Caco-2 (cell line): ENCODE measurements at regions of chr1 and their contacts with region 1.

Region 1: GRCh38 chr1:55428944-55429931 is 214.1 kb upstream of the USP24 start:
- DNase-seq: peak; percentile 86 to 95
- H3K4me3 ChIP-seq: no peak overlapping the region
- H3K4me3 Mint-ChIP-seq: peak overlapping the region; percentile 15
- H3K27ac Mint-ChIP-seq: peak overlapping the region; percentile 84
- H3K4me1 ChIP-seq: peaks cover 43% of the 10 kb centered on the region
- H3K4me1 Mint-ChIP-seq: peaks cover 24% of the 10 kb centered on the region
- H3K27me3 ChIP-seq: no peaks in the 10 kb centered on the region
- H3K27me3 Mint-ChIP-seq: no peaks in the 10 kb centered on the region
- CTCF ChIP-seq: no peak

Region 2: DNA sequence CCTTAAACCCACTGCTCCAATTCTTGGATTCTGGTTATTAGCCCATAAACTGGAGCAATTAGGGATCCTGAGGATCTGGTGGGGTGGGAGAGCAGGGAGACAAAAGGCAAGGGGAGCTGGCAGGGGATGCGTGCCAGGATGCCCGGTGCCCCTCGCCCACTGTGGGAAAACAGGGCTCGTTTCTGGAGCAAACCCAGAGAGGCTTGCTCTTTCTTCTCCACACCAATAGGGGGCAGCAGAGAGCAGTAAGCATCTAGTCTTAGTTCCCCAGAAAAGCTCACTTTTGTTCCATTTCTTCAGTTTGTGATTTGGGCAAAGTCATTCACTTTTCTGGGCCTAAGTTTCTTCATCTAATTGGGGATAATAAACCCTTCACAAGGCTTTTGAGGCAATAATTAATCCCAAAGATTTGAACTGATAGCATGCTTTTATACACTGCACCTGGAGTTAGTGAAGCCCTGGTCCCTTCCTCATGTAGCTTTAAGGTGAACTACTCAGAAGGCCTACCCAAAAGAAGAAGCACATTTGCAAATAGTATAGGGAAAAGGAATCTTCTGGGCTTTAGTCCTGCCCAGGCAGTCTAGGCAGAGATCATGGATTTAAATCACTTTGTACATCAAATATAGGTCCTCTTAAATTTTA is 53.5 kb before region 1 on chr1:
- CTCF ChIA-PET with region 1: no interaction called
- POLR2A ChIA-PET with region 1: no interaction called
- intact Hi-C with region 1: loop called (anchors 5 kb)
- DNase-seq: peak in 1 of 2 experiments; percentile 46
- H3K4me3 ChIP-seq: no peak overlapping the region
- H3K4me3 Mint-ChIP-seq: no peak overlapping the region
- H3K27ac Mint-ChIP-seq: no peak overlapping the region
- H3K4me1 ChIP-seq: no peaks in the 10 kb centered on the region
- H3K4me1 Mint-ChIP-seq: no peaks in the 10 kb centered on the region
- H3K27me3 ChIP-seq: no peaks in the 10 kb centered on the region
- H3K27me3 Mint-ChIP-seq: no peaks in the 10 kb centered on the region
- CTCF ChIP-seq: peak; percentile 63 to 77

Region 3: GRCh38 chr1:55536545-55536865 is 107.3 kb after region 1 on chr1:
- CTCF ChIA-PET with region 1: no interaction called
- POLR2A ChIA-PET with region 1: no interaction called
- intact Hi-C with region 1: loop called (anchors 10 kb)
- DNase-seq: no peak
- H3K4me3 ChIP-seq: no peak overlapping the region
- H3K4me3 Mint-ChIP-seq: no peak overlapping the region
- H3K27ac Mint-ChIP-seq: no peak overlapping the region
- H3K4me1 ChIP-seq: peaks cover 30% of the 10 kb centered on the region
- H3K4me1 Mint-ChIP-seq: no peaks in the 10 kb centered on the region
- H3K27me3 ChIP-seq: no peaks in the 10 kb centered on the region
- H3K27me3 Mint-ChIP-seq: no peaks in the 10 kb centered on the region
- CTCF ChIP-seq: no peak